ENCODE measurements at regions of chr1 and their contacts with region 1.

Region 1: DNA sequence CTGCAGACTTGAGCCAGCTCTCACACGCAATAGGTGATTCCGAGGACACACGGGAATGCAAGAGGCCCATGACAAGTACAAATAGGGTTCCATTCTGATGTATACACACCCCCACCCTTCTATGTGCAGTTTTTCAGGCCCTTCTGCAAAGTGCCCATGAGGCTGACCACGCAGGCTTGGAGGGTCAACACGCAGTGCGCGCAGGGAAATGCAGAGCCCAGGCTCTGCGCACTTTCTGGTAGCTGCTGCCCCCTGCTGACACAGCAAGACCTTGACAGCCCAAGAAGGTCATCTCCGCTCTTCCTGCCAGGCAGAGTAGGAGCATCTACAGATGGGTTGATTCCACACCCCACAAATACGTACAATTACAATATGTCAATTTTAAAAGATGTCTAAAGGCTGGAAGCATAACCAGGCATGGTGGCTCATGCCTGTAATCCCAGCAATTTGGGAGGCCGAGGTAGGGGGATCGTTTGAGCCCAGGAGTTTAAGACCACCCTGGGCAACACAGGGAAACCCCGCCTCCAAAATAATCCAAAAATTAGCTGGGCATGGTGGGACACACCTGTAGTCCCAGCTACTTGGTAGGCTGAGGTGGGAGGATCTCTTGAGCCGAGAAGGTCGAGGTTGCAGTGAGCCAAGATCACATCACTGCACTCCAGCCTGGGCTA is 18.5 kb downstream of the SH3BP5L start:
- DNase-seq: peak; percentile 66
- H3K4me3 Mint-ChIP-seq: no peak overlapping the region
- H3K27ac Mint-ChIP-seq: no peak overlapping the region
- H3K4me1 Mint-ChIP-seq: peaks cover 18% of the 10 kb centered on the region
- H3K27me3 Mint-ChIP-seq: no peaks in the 10 kb centered on the region
- CTCF ChIP-seq: peak; percentile 98

Region 2: DNA sequence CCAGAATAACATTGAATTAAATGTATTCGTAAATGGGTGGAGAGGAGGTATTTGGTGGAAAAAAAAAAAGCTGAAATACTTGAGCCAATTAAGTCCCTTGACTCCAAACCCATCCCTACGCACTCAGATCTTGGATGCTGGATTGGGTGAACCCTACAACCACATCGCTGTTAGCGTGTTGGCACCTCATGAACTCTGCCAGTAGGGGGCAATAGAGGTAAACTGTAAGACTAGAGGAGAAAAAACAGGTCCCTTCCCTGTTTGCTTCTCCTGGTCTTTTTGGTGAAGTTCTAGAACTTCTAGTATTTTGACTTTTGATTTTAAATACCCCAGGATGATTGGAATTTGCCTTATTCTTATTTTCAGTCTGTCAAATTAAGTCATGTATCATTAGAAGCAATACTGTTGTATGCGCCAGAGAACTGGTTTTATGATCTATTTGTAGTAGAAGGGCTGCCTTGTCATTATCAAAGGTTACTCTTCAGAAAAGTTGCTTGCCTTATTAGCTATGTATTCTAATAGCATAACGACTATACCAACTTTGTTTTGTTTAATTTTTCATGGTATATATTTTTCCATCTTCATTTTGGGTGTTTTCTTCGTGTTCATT is 1125.8 kb before region 1 on chr1:
- CTCF ChIA-PET with region 1: interaction called, 4 read pairs
- POLR2A ChIA-PET with region 1: no interaction called
- intact Hi-C with region 1: loop called (anchors 5 kb)
- DNase-seq: peak; percentile 82
- H3K4me3 Mint-ChIP-seq: no peak overlapping the region
- H3K27ac Mint-ChIP-seq: no peak overlapping the region
- H3K4me1 Mint-ChIP-seq: peaks cover 6% of the 10 kb centered on the region
- H3K27me3 Mint-ChIP-seq: no peaks in the 10 kb centered on the region
- CTCF ChIP-seq: peak; percentile 99

Region 3: GRCh38 chr1:248404024-248404423 is 403.2 kb before region 1 on chr1:
- CTCF ChIA-PET with region 1: interaction called, 8 read pairs
- POLR2A ChIA-PET with region 1: no interaction called
- intact Hi-C with region 1: loop called (anchors 1 kb)
- DNase-seq: peak; percentile 27
- H3K4me3 Mint-ChIP-seq: no peak overlapping the region
- H3K27ac Mint-ChIP-seq: no peak overlapping the region
- H3K4me1 Mint-ChIP-seq: peaks cover 5% of the 10 kb centered on the region
- H3K27me3 Mint-ChIP-seq: no peaks in the 10 kb centered on the region
- CTCF ChIP-seq: no peak

Region 4: DNA sequence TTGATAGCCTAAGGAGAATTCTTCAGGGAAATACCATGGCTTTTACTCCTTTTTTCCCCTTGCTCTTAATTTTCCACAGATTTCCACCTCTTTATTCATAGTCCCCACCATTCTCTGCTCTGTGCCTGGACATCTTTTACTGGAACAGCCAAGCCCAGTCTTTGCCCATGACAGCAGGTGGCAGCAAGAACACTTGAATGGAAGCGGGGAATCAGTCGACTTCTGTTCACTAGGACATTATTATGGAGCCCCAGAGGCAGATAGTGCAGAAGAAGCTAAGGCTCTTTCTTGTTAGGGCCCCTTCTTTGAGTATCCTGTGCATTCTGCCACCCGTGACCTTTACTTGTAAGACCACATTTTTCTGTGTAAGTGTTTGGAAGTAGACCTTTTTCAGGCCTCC is 110.9 kb before region 1 on chr1:
- CTCF ChIA-PET with region 1: interaction called, 155 read pairs
- POLR2A ChIA-PET with region 1: interaction called, 3 read pairs
- intact Hi-C with region 1: no loop called
- DNase-seq: peak; percentile 33
- H3K4me3 Mint-ChIP-seq: no peak overlapping the region
- H3K27ac Mint-ChIP-seq: peak overlapping the region; percentile 68
- H3K4me1 Mint-ChIP-seq: peaks cover 29% of the 10 kb centered on the region
- H3K27me3 Mint-ChIP-seq: no peaks in the 10 kb centered on the region
- CTCF ChIP-seq: peak; percentile 39

Region 5: GRCh38 chr1:248786156-248786555 is 21.0 kb before region 1 on chr1:
- CTCF ChIA-PET with region 1: interaction called, 49 read pairs
- POLR2A ChIA-PET with region 1: interaction called, 3 read pairs
- intact Hi-C with region 1: no loop called
- DNase-seq: peak; percentile 43
- H3K4me3 Mint-ChIP-seq: no peak overlapping the region
- H3K27ac Mint-ChIP-seq: no peak overlapping the region
- H3K4me1 Mint-ChIP-seq: peaks cover 5% of the 10 kb centered on the region
- H3K27me3 Mint-ChIP-seq: no peaks in the 10 kb centered on the region
- CTCF ChIP-seq: no peak

Region 6: GRCh38 chr1:248821101-248821500 is 13.9 kb after region 1 on chr1:
- CTCF ChIA-PET with region 1: interaction called, 40 read pairs
- POLR2A ChIA-PET with region 1: interaction called, 16 read pairs
- intact Hi-C with region 1: no loop called
- DNase-seq: peak; percentile 41
- H3K4me3 Mint-ChIP-seq: no peak overlapping the region
- H3K27ac Mint-ChIP-seq: peak overlapping the region; percentile 16
- H3K4me1 Mint-ChIP-seq: peaks cover 53% of the 10 kb centered on the region
- H3K27me3 Mint-ChIP-seq: no peaks in the 10 kb centered on the region
- CTCF ChIP-seq: no peak

Region 7: GRCh38 chr1:248837794-248838356 is 30.7 kb after region 1 on chr1 and contains the start of gene ZNF672:
- CTCF ChIA-PET with region 1: interaction called, 23 read pairs
- POLR2A ChIA-PET with region 1: interaction called, 3 read pairs
- intact Hi-C with region 1: no loop called
- DNase-seq: peak; percentile 100
- H3K4me3 Mint-ChIP-seq: no peak within 1 kb of the TSS
- H3K27ac Mint-ChIP-seq: no peak within 1 kb of the TSS
- H3K4me1 Mint-ChIP-seq: peaks cover 20% of the 10 kb centered on the region
- H3K27me3 Mint-ChIP-seq: no peaks in the 10 kb centered on the region
- CTCF ChIP-seq: no peak
- total RNA-seq, gene ZNF672: 35.8 and 36.2 TPM in 2 replicates

Measured in MCF 10A (cell line).